ENCODE measurements at regions of chr12 and their contacts with region 1.

Region 1: DNA sequence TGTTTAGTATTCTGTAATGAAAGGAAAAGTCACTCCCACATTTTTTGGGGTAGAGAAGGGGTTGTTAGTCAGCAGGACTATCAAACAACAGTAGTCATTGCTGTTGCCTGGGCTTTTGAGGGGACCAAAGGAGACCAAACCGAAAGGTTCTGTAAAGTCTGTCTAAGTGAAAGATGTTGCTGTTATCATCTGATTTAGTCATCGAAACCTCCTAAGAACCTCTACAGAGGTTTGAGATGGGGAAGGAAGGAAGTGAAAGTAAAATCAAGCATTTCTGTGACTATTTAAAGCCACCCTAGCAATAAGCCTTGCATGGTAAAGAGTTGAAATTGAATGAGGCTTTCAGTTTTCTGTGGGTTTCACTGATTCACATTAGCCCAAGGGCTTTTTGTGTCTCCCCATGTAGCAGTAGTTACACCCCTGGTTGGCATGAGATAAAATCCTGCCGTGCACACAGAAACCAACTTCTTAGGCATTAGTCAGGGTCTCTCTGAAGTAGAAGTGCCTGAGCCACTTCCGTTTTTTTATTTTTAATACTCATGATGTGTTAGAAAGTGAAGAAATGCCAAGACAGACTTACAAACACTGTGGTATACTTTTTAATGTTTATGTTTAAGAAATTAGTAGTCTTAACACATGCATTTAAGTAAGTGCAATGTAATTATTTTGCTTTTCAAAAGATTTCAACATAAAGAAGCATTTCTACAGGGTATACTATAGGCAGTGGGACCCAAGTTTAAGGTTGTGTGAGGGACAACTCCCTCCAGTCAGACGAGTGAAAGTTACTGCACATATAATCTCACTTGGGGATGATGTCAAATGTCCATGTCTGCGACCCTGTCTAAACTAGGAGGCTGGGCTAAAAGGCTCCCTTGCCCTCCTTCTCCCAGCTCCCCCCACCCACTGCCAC is 50.4 kb downstream of the DYRK2 start:
- DNase-seq: peak; percentile 76
- ATAC-seq: peak; percentile 93
- H3K4me3 Mint-ChIP-seq: peak overlapping the region; percentile 32
- H3K27ac Mint-ChIP-seq: peak overlapping the region; percentile 74
- H3K4me1 Mint-ChIP-seq: peaks cover 57% of the 10 kb centered on the region
- H3K27me3 Mint-ChIP-seq: no peaks in the 10 kb centered on the region

Region 2: DNA sequence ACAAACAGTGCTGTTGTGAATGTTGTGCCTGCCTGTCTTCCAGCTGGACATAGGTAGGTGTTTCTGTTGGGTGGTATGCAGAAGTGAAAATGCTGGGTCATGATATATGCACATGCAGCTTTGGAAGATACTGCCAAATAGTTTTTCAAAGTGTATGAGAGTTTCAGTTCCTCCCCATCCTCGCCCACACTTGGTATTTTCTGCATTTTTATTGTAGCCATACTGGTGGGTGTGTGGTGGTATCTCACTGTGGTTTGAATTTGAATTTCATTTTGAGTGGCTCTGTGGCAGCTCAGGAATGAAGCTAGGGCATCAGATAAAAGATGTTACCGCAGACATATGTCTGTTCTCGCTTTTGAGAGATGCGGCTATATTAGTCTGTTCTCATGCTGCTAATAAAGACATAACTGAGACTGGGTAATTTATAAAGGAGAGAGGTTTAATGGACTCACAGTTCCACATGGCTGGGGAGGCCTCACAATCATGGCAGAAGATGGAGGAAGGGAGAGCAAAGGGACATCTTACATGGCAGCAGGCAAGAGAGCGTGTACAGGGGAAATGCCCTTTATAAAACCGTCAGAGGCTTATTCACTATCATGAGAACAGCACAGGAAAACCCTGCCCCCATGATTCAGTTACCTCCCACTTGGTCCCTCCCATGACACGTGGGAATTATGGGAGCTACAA is 246.7 kb before region 1 on chr12:
- CTCF ChIA-PET with region 1: no interaction called
- POLR2A ChIA-PET with region 1: no interaction called
- intact Hi-C with region 1: loop called (anchors 1 kb)
- DNase-seq: peak; percentile 50
- ATAC-seq: peak; percentile 69
- H3K4me3 Mint-ChIP-seq: no peak overlapping the region
- H3K27ac Mint-ChIP-seq: peak overlapping the region; percentile 6
- H3K4me1 Mint-ChIP-seq: peaks cover 44% of the 10 kb centered on the region
- H3K27me3 Mint-ChIP-seq: peaks cover 22% of the 10 kb centered on the region

Region 3: DNA sequence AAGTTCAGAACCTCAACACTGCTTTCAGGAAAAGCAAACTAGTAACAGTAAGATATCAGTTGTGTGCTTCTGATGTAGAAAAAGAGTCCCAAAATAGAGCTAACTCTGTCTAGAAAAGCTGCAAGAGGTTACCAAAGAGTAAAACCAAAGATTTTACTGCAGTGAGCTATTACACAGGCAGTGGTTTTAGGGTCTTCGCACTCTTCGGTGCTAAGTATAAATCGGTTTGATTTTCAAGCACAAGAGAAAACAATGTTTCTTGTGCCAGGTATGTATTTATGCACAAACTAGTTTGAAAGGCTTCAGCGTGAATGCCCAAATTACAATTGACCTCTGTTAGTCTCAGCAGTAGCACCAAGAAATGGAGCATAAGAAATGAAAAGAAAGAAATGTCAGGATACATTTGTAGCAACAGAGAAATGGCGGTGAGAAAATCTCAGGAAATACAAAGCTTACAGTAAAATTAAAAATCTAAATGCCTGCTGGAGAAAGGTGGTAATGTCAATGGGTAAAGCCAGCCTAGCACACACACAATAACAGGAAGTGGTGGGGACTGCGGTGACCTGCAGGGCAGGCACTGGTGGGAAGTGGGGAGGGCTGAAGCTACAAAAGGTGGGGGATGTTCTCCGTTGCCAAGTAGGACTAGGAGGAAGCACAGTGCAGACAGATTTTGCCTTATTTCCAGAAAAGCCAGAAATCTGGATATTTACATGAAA is 68.4 kb before region 1 on chr12:
- CTCF ChIA-PET with region 1: no interaction called
- POLR2A ChIA-PET with region 1: no interaction called
- intact Hi-C with region 1: loop called (anchors 2 to 5 kb)
- DNase-seq: peak; percentile 90
- ATAC-seq: peak; percentile 93
- H3K4me3 Mint-ChIP-seq: peak overlapping the region; percentile 56
- H3K27ac Mint-ChIP-seq: peak overlapping the region; percentile 90
- H3K4me1 Mint-ChIP-seq: peaks cover 72% of the 10 kb centered on the region
- H3K27me3 Mint-ChIP-seq: no peaks in the 10 kb centered on the region

Region 4: GRCh38 chr12:67640863-67641262 is 58.1 kb before region 1 on chr12:
- CTCF ChIA-PET with region 1: no interaction called
- POLR2A ChIA-PET with region 1: no interaction called
- intact Hi-C with region 1: no loop called
- DNase-seq: no peak
- ATAC-seq: peak; percentile 72
- H3K4me3 Mint-ChIP-seq: no peak overlapping the region
- H3K27ac Mint-ChIP-seq: no peak overlapping the region
- H3K4me1 Mint-ChIP-seq: peaks cover 10% of the 10 kb centered on the region
- H3K27me3 Mint-ChIP-seq: no peaks in the 10 kb centered on the region

Region 5: DNA sequence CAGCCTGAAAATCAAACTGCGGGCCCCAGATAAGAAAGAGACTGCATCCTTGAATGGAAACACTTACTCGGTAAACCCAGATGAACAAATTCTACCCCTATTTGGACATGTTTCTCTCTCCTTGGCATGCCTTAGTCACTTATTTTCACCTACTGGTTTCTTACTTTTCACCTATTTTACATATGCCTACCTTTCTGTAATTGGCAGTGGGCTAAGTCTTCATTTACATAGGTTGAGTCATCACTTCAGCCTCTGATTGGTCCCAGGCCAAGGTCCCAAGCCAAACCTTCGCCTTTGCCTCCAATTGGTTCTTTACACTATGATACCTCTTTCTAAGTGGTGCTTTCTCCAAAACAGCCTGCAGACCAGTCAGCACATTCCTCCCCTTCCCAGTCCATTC is 60.9 kb after region 1 on chr12:
- CTCF ChIA-PET with region 1: no interaction called
- POLR2A ChIA-PET with region 1: no interaction called
- intact Hi-C with region 1: loop called in 1 of 2 experiments (anchors 1 kb)
- DNase-seq: peak; percentile 38
- ATAC-seq: peak; percentile 94
- H3K4me3 Mint-ChIP-seq: no peak overlapping the region
- H3K27ac Mint-ChIP-seq: peak overlapping the region; percentile 86
- H3K4me1 Mint-ChIP-seq: peaks cover 41% of the 10 kb centered on the region
- H3K27me3 Mint-ChIP-seq: no peaks in the 10 kb centered on the region

Region 6: GRCh38 chr12:67827820-67828383 is 129.0 kb after region 1 on chr12:
- CTCF ChIA-PET with region 1: no interaction called
- POLR2A ChIA-PET with region 1: no interaction called
- intact Hi-C with region 1: loop called (anchors 1 to 5 kb)
- DNase-seq: peak; percentile 77
- ATAC-seq: peak; percentile 99
- H3K4me3 Mint-ChIP-seq: peak overlapping the region; percentile 17
- H3K27ac Mint-ChIP-seq: peak overlapping the region; percentile 72
- H3K4me1 Mint-ChIP-seq: peaks cover 22% of the 10 kb centered on the region
- H3K27me3 Mint-ChIP-seq: no peaks in the 10 kb centered on the region

Region 7: DNA sequence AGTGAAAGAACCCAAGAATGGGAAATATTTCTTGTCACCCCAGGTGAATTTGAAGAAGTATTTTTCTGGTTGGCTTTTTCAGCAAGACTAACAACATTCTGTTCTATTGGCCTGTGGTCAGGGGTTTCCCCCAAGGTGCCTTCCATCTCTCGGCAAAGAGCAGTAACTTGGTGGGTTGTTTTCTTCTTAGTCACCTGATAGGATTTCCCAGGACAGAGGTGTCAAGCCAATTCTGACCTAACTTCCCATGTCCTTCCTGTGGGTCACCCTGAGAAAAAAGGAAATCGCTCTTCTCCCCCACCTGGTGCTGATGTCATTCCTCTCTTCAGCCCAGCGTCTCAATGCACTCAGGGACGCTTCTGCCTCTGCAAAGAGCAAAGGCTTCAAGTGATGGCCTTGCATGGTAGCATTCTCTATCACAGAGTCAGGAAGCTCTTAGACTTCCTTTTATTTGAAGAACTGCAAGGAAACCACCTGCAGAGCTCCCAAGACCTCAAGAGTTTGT is 476.7 kb after region 1 on chr12:
- CTCF ChIA-PET with region 1: no interaction called
- POLR2A ChIA-PET with region 1: no interaction called
- intact Hi-C with region 1: loop called in 1 of 2 experiments (anchors 10 kb)
- DNase-seq: peak; percentile 78
- ATAC-seq: peak; percentile 84
- H3K4me3 Mint-ChIP-seq: peak overlapping the region; percentile 46
- H3K27ac Mint-ChIP-seq: peak overlapping the region; percentile 65
- H3K4me1 Mint-ChIP-seq: peaks cover 69% of the 10 kb centered on the region
- H3K27me3 Mint-ChIP-seq: no peaks in the 10 kb centered on the region